Activated CD4-positive, alpha-beta T cell treated with anti-CD3 and anti-CD28 coated beads, Interleukin-2, amount 10 ng/mL, durations not matched to agents 24 days and 14 days (primary cell): ENCODE measurements at regions of chr7 and their contacts with region 1.

Region 1: DNA sequence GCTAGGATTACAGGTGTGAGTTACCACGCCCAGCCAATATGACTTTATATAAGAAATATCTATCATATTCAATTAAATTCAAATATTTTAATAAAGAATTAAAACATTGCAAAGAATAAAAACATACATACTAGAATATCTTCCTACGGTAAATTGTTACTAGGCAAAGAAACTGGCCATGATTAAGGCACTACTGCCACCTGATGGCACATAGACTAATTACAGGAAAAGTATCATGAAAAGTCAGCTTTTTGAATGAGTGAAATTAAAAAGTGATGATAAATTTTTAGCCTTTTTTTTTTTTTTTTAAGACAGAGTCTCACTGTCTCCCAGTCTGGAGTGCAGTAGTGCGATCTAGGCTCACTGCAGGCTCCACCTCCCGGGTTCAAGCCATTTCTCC is 30.9 kb downstream of the MRPS33 start:
- DNase-seq: no peak
- H3K4me3 Mint-ChIP-seq: no peak overlapping the region
- H3K27ac Mint-ChIP-seq: no peak overlapping the region
- H3K4me1 Mint-ChIP-seq: no peaks in the 10 kb centered on the region
- H3K27me3 Mint-ChIP-seq: peaks cover 19% of the 10 kb centered on the region

Region 2: DNA sequence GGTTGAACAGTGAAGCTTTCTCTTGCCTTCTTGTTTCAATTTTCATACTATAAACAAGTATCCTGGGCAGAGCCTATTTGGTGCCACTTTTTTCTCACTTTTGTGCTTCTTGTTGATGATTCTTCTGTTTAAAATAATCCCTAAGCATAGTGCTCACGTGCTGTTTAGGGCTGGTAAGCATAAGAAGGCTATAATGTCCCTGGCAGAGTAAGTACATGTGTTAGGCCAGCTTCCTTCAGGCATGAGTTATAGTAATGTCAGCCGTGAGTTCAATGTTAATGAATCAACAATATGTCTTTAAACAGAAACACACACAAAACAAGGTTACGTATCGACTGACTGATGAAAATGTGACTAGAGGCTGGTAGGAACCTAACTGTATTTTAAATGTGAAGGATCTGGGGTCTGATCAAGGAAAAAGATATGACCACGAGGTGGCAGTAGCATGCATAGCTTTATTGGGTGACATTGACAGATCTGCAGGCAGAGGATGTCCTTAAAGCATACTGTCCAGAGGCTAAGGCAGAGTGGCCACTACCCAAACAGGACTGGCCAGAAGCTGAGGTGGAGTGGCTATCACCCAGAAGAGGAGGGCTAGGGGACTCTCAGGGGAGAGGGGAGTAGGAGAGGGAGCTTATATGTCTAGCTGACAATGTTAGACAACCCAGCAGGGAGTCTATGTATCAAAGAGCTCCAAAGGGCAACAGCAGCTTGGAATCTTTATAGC is 172.8 kb before region 1 on chr7:
- intact Hi-C with region 1: loop called (anchors 1 kb)
- DNase-seq: peak; percentile 90
- H3K4me3 Mint-ChIP-seq: no peak overlapping the region
- H3K27ac Mint-ChIP-seq: no peak overlapping the region
- H3K4me1 Mint-ChIP-seq: no peaks in the 10 kb centered on the region
- H3K27me3 Mint-ChIP-seq: no peaks in the 10 kb centered on the region

Region 3: GRCh38 chr7:141001122-141001521 is 17.3 kb after region 1 on chr7:
- intact Hi-C with region 1: no loop called
- DNase-seq: no peak
- H3K4me3 Mint-ChIP-seq: no peak overlapping the region
- H3K27ac Mint-ChIP-seq: no peak overlapping the region
- H3K4me1 Mint-ChIP-seq: peaks cover 3% of the 10 kb centered on the region
- H3K27me3 Mint-ChIP-seq: peaks cover 24% of the 10 kb centered on the region

Region 4: GRCh38 chr7:141053626-141054025 is 69.8 kb after region 1 on chr7:
- intact Hi-C with region 1: no loop called
- DNase-seq: peak; percentile 89
- H3K4me3 Mint-ChIP-seq: peak overlapping the region; percentile 16
- H3K27ac Mint-ChIP-seq: peak overlapping the region; percentile 83
- H3K4me1 Mint-ChIP-seq: peaks cover 20% of the 10 kb centered on the region
- H3K27me3 Mint-ChIP-seq: peaks cover 21% of the 10 kb centered on the region

Region 5: GRCh38 chr7:141210862-141211261 is 227.1 kb after region 1 on chr7:
- intact Hi-C with region 1: no loop called
- DNase-seq: no peak
- H3K4me3 Mint-ChIP-seq: no peak overlapping the region
- H3K27ac Mint-ChIP-seq: no peak overlapping the region
- H3K4me1 Mint-ChIP-seq: no peaks in the 10 kb centered on the region
- H3K27me3 Mint-ChIP-seq: peaks cover 9% of the 10 kb centered on the region